IMR-90 (cell line): ENCODE measurements at regions of chr11 and their contacts with region 1.

Region 1: GRCh38 chr11:107770551-107770951 is 58.7 kb upstream of the SLN start:
- DNase-seq: peak; percentile 19
- ATAC-seq: peak; percentile 30
- H3K4me3 ChIP-seq: no peak overlapping the region
- H3K27ac ChIP-seq: no peak overlapping the region
- H3K4me1 ChIP-seq: peaks cover 4% of the 10 kb centered on the region
- H3K27me3 ChIP-seq: no peaks in the 10 kb centered on the region
- CTCF ChIP-seq: no peak
- POLR2A ChIP-seq: no peak
- RAD21 ChIP-seq: no peak

Region 2: GRCh38 chr11:107565219-107565937 is 205.2 kb before region 1 on chr11 and contains the start of gene ALKBH8:
- CTCF ChIA-PET with region 1: interaction called, 7 read pairs
- POLR2A ChIA-PET with region 1: no interaction called
- dilution Hi-C with region 1: no loop called
- in situ Hi-C with region 1: loop called (anchors 10 kb)
- intact Hi-C with region 1: loop called (anchors 1 kb)
- DNase-seq: peak; percentile 58
- ATAC-seq: peak; percentile 92
- H3K4me3 ChIP-seq: peak within 1 kb of the TSS; percentile 85
- H3K27ac ChIP-seq: peak within 1 kb of the TSS; percentile 84
- H3K4me1 ChIP-seq: peaks cover 7% of the 10 kb centered on the region
- H3K27me3 ChIP-seq: no peaks in the 10 kb centered on the region
- CTCF ChIP-seq: no peak
- POLR2A ChIP-seq: no peak
- RAD21 ChIP-seq: no peak
- total RNA-seq, gene ALKBH8: 6.6 and 12.5 TPM in 2 replicates

Region 3: GRCh38 chr11:107573438-107573837 is 197.1 kb before region 1 on chr11:
- CTCF ChIA-PET with region 1: interaction called, 4 read pairs
- POLR2A ChIA-PET with region 1: no interaction called
- dilution Hi-C with region 1: no loop called
- in situ Hi-C with region 1: loop called (anchors 10 kb)
- intact Hi-C with region 1: loop called (anchors 1 kb)
- DNase-seq: no peak
- ATAC-seq: no peak
- H3K4me3 ChIP-seq: no peak overlapping the region
- H3K27ac ChIP-seq: no peak overlapping the region
- H3K4me1 ChIP-seq: no peaks in the 10 kb centered on the region
- H3K27me3 ChIP-seq: peaks cover 4% of the 10 kb centered on the region
- CTCF ChIP-seq: no peak
- POLR2A ChIP-seq: no peak
- RAD21 ChIP-seq: no peak

Region 4: DNA sequence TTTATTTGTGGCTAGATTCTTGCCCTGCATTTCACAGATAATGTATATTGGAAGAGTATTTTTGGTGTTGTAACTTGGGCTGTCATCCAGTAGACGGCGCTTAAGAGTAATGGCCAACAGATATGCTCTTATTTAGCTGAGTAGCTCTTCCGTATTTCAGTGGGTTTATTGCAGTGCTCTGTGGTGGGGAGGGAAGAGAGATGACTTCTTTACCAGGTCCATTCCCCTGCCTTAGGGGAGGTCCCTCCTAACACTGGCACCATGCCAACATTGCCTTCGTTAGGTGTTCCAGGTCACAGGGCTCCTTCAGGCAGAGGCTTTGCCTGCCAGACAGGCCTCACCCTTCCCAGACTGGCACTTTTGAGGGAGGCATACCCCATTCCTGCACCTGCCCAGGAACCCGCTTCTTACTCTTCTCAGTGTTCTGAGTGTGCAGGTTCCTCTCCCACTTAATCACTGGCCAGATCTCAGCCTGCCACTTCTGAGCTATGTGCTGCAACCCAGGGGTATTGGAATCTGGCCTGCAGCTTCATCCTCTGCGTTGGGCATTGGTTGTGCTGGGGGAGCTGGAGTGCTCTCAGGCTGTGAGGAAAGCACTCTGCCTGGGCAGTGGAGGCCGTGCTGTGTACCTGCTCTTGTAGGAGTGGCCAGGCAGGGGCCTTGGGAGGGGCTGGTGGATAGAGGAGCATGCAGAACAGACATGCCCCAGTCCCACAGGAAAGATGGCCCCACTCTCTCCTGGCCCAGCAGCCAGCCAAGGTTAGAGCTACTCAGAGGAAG is 29.3 kb before region 1 on chr11:
- CTCF ChIA-PET with region 1: interaction called, 10 read pairs
- POLR2A ChIA-PET with region 1: no interaction called
- dilution Hi-C with region 1: no loop called
- in situ Hi-C with region 1: no loop called
- intact Hi-C with region 1: no loop called
- DNase-seq: peak; percentile 44
- ATAC-seq: peak; percentile 64
- H3K4me3 ChIP-seq: no peak overlapping the region
- H3K27ac ChIP-seq: no peak overlapping the region
- H3K4me1 ChIP-seq: no peaks in the 10 kb centered on the region
- H3K27me3 ChIP-seq: peaks cover 5% of the 10 kb centered on the region
- CTCF ChIP-seq: peak; percentile 59
- POLR2A ChIP-seq: no peak
- RAD21 ChIP-seq: peak; percentile 54